ENCODE measurements at regions of chr2 and their contacts with region 1.

Region 1: DNA sequence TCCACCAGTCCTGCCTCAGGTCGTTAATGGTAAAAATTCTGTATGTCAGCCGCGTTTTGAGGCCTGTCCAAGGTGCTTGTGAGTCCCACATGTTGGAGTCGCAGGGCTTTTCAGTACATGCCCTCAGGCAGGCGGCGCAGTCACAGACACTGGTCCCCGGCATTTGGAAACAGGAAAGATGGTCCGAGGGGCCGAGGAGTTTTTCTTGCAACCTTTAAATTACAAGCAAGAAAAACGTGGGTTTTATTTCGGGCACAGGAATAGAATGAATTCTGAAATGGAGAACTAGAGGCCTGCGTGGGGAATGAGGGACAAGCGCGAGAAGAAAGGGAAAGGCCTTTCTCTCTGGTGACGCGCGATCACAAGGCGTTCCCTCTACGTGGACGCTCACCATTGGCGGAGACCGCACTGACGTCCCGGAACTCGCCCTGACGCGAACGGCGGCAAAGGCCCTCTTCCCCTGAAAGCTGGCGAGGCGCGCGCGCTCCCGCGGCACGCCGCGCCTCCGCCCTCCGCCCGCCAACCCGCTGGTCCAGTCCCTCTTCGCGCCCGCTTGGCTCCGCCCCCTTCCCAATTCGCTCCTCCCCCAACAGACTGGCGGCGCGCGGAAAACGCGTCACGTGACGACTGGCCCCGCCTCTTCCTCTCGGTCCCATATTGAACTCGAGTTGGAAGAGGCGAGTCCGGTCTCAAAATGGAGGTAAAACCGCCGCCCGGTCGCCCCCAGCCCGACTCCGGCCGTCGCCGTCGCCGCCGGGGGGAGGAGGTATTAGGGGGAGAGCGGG is at the start of gene HNRNPA3:
- DNase-seq: peak; percentile 99
- H3K4me3 ChIP-seq: peak within 1 kb of the TSS; percentile 72
- H3K4me3 Mint-ChIP-seq: peak within 1 kb of the TSS; percentile 87
- H3K27ac Mint-ChIP-seq: peak within 1 kb of the TSS; percentile 99
- H3K4me1 ChIP-seq: peaks cover 22% of the 10 kb centered on the region
- H3K4me1 Mint-ChIP-seq: peaks cover 8% of the 10 kb centered on the region
- H3K27me3 ChIP-seq: no peaks in the 10 kb centered on the region
- H3K27me3 Mint-ChIP-seq: no peaks in the 10 kb centered on the region
- CTCF ChIP-seq: peak in 1 of 2 experiments; percentile 37
- total RNA-seq, gene HNRNPA3: 322 and 332 TPM in 2 replicates

Region 2: GRCh38 chr2:177169810-177170514 is 42.3 kb before region 1 on chr2:
- CTCF ChIA-PET with region 1: interaction called, 4 read pairs
- POLR2A ChIA-PET with region 1: interaction called, 9 read pairs
- intact Hi-C with region 1: loop called (anchors 1 kb)
- DNase-seq: peak; percentile 76 to 87
- H3K4me3 ChIP-seq: no peak overlapping the region
- H3K4me3 Mint-ChIP-seq: peak overlapping the region; percentile 23
- H3K27ac Mint-ChIP-seq: peak overlapping the region; percentile 56
- H3K4me1 ChIP-seq: peaks cover 80% of the 10 kb centered on the region
- H3K4me1 Mint-ChIP-seq: peaks cover 46% of the 10 kb centered on the region
- H3K27me3 ChIP-seq: no peaks in the 10 kb centered on the region
- H3K27me3 Mint-ChIP-seq: no peaks in the 10 kb centered on the region
- CTCF ChIP-seq: no peak

Region 3: DNA sequence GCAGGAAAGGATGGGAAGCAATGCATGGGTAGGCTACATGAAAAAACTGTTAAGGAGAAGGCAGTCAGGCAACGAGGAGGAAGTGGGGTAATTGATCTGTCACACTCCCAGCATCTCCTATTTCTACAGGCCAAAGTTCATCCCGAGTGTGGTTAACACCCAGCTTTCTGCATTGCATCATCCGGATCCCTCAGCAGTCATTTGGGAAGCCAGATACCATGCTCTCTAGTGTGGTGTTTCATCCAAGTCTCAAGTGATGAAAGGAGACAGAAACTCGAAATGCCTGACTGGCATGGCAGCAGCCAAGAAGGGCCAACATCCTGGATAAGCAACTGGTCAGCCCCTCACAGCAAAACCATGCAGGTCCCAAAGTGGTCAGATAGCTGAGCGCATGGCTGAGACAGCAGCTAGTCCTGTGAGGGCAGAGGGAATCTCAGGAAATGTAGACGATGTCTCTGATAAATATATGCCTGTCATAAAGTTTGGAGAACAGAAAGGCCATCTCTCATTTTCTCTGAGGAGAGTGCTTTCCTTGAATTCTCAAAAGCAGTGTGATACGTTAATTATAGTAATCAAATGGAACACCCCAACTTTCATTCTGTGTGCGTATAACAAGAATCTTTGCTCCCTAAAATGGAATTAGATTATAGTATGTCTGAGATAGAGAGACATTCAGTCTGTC is 24.5 kb before region 1 on chr2:
- CTCF ChIA-PET with region 1: no interaction called
- POLR2A ChIA-PET with region 1: no interaction called
- intact Hi-C with region 1: loop called (anchors 1 kb)
- DNase-seq: peak; percentile 69 to 74
- H3K4me3 ChIP-seq: no peak overlapping the region
- H3K4me3 Mint-ChIP-seq: peak overlapping the region; percentile 23
- H3K27ac Mint-ChIP-seq: peak overlapping the region; percentile 75
- H3K4me1 ChIP-seq: peaks cover 35% of the 10 kb centered on the region
- H3K4me1 Mint-ChIP-seq: peaks cover 22% of the 10 kb centered on the region
- H3K27me3 ChIP-seq: no peaks in the 10 kb centered on the region
- H3K27me3 Mint-ChIP-seq: no peaks in the 10 kb centered on the region
- CTCF ChIP-seq: no peak

Region 4: DNA sequence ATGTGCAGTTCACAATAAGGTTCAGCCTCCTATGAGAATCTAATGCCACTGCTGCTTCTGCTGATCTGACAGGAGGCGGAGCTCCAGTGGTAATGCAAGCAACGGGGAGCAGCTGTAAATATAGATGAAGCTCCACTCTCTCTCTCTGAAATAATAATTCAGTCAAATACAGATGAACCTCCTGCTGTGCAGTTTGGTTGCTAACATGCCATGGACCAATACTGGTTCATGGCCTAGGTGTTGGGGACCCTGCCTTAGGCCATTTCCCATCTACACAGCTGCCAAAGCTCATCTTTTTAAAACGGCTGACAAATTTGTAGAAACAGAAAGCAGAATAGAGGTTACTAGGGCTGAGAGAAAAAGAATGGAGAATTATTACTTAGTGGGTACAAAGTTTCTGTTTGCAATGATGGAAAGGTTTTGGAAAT is 10.4 kb before region 1 on chr2:
- CTCF ChIA-PET with region 1: interaction called, 4 read pairs
- POLR2A ChIA-PET with region 1: interaction called, 11 read pairs
- intact Hi-C with region 1: no loop called
- DNase-seq: no peak
- H3K4me3 ChIP-seq: no peak overlapping the region
- H3K4me3 Mint-ChIP-seq: no peak overlapping the region
- H3K27ac Mint-ChIP-seq: no peak overlapping the region
- H3K4me1 ChIP-seq: no peaks in the 10 kb centered on the region
- H3K4me1 Mint-ChIP-seq: no peaks in the 10 kb centered on the region
- H3K27me3 ChIP-seq: no peaks in the 10 kb centered on the region
- H3K27me3 Mint-ChIP-seq: no peaks in the 10 kb centered on the region
- CTCF ChIP-seq: no peak

Region 5: GRCh38 chr2:177397481-177398289 is 185.4 kb after region 1 on chr2:
- CTCF ChIA-PET with region 1: no interaction called
- POLR2A ChIA-PET with region 1: no interaction called
- intact Hi-C with region 1: loop called (anchors 2 kb)
- DNase-seq: peak; percentile 60 to 63
- H3K4me3 ChIP-seq: no peak overlapping the region
- H3K4me3 Mint-ChIP-seq: peak overlapping the region; percentile 10
- H3K27ac Mint-ChIP-seq: peak overlapping the region; percentile 58
- H3K4me1 ChIP-seq: peaks cover 60% of the 10 kb centered on the region
- H3K4me1 Mint-ChIP-seq: peaks cover 34% of the 10 kb centered on the region
- H3K27me3 ChIP-seq: no peaks in the 10 kb centered on the region
- H3K27me3 Mint-ChIP-seq: no peaks in the 10 kb centered on the region
- CTCF ChIP-seq: no peak